Activated CD4-positive, alpha-beta memory T cell treated with anti-CD3 and anti-CD28 coated beads, Interleukin-2, amount 10 ng/mL, durations not matched to agents 7 days and 5 days (primary cell): ENCODE measurements at regions of chr10 and their contacts with region 1.

Region 1: DNA sequence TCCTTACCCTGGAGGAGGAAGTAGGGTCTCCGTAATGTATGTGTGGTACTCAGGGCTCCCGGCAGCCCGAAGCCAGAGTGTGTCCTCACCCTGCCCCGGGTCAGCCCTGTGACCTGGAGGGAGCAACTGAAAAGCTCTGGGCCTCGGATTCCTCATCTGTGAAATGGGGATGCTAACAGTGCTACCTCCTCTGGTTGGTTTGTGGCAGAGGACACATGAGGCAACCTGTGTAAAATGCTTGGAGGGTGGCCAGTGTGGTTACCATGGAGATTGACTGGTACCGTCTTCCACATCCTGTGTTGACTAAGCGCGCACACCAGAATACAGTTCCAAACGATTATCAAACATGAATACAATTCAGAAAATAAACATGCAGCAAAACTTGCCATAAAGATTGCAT is 163.8 kb upstream of the KLF6 start:
- DNase-seq: peak; percentile 85
- H3K4me3 Mint-ChIP-seq: peak overlapping the region; percentile 70
- H3K27ac Mint-ChIP-seq: peak overlapping the region; percentile 90
- H3K4me1 Mint-ChIP-seq: peaks cover 73% of the 10 kb centered on the region
- H3K27me3 Mint-ChIP-seq: no peaks in the 10 kb centered on the region

Region 2: DNA sequence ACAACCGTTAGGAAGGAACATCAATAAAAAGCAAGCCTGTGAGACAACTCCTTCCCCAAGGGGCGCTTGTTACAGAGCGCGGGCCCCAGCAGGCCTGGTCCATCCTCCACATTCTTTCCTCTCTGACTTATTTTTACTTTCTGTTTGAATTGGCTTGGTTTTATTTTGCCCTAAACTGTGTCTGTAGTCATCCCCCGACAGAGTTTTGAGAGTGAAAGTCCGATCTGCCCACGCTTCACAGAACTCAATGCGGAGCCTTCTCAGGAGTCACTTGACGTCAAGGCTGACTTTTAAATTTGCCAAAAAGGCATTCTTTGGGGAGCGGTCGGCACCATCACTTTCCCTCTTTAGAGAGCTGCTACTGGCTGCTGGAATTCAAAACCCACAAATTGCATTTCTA is 13.7 kb before region 1 on chr10:
- CTCF ChIA-PET with region 1: interaction called, 3 read pairs
- POLR2A ChIA-PET with region 1: interaction called, 13 read pairs
- DNase-seq: peak; percentile 81
- H3K4me3 Mint-ChIP-seq: peak overlapping the region; percentile 58
- H3K27ac Mint-ChIP-seq: peak overlapping the region; percentile 86
- H3K4me1 Mint-ChIP-seq: peaks cover 50% of the 10 kb centered on the region
- H3K27me3 Mint-ChIP-seq: no peaks in the 10 kb centered on the region

Region 3: GRCh38 chr10:3961082-3961481 is 12.2 kb after region 1 on chr10:
- CTCF ChIA-PET with region 1: interaction called, 4 read pairs
- POLR2A ChIA-PET with region 1: interaction called, 16 read pairs
- DNase-seq: peak; percentile 76
- H3K4me3 Mint-ChIP-seq: peak overlapping the region; percentile 18
- H3K27ac Mint-ChIP-seq: peak overlapping the region; percentile 80
- H3K4me1 Mint-ChIP-seq: peaks cover 49% of the 10 kb centered on the region
- H3K27me3 Mint-ChIP-seq: no peaks in the 10 kb centered on the region